ENCODE measurements at regions of chr7 and their contacts with region 1.

Region 1: GRCh38 chr7:27375958-27376357 is 133.4 kb downstream of the EVX1 start:
- DNase-seq: no peak
- H3K4me3 ChIP-seq: no peak overlapping the region
- H3K27ac ChIP-seq: no peak overlapping the region
- H3K4me1 ChIP-seq: peaks cover 0 to 8% (median 2%) of the 10 kb centered on the region in 4 experiments; a peak in 2 of 7 replicates
- H3K27me3 ChIP-seq: no peaks in the 10 kb centered on the region
- CTCF ChIP-seq: no peak
- EP300 ChIP-seq: no peak
- POLR2A ChIP-seq: no peak
- RAD21 ChIP-seq: no peak

Region 2: DNA sequence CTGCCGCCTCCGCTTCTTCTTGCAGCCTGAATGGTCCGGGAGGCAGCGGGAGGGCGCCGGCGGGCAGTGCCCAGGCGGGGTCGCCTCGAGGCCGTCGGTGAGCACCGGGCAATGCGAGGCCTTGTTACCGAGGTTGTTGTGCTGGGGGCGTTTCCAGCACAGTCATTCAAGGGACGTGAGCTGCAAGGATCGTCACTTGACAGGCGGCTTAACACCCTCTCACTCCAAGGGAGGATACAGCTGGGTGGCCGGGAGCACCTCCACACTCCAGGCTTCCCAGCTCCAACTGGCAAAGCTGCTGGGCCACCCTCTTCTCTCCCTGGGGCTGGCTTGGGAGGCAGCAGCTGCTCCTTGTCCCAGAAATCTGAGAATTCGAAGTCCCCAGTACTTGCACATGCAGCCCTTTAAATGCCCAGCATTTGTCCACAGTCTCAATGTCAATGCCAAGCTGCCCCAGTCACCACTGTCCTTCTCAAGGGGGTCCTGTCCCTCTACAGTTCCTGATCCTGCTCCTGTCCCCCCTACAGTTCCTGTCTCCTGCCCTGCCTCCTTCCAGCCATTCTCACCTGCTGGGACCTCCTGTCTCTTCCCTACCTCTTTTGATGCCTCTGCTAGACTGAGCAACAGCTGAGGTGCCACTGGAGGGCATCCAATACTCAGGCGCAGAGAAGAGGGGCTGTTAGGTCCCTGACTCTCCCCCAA is 186.5 kb before region 1 on chr7:
- CTCF ChIA-PET with region 1: no interaction called
- POLR2A ChIA-PET with region 1: no interaction called
- DNase-seq: peak in 1 of 2 experiments; percentile 64
- H3K4me3 ChIP-seq: peak overlapping the region in 1 of 4 experiments; percentile 38; a peak in 2 of 8 replicates
- H3K27ac ChIP-seq: no peak overlapping the region
- H3K4me1 ChIP-seq: peaks cover 0 to 27% (median 16%) of the 10 kb centered on the region in 4 experiments; a peak in 5 of 7 replicates
- H3K27me3 ChIP-seq: peaks cover 97 to 100% (median 98%) of the 10 kb centered on the region in 4 experiments
- CTCF ChIP-seq: no peak
- EP300 ChIP-seq: no peak
- POLR2A ChIP-seq: no peak
- RAD21 ChIP-seq: peak in 1 of 2 experiments; percentile 3; a peak in 1 of 4 replicates

Region 3: GRCh38 chr7:27389496-27389895 is 13.5 kb after region 1 on chr7:
- CTCF ChIA-PET with region 1: interaction called, 10 read pairs
- POLR2A ChIA-PET with region 1: no interaction called
- DNase-seq: no peak
- H3K4me3 ChIP-seq: no peak overlapping the region
- H3K27ac ChIP-seq: no peak overlapping the region
- H3K4me1 ChIP-seq: no peaks in the 10 kb centered on the region
- H3K27me3 ChIP-seq: no peaks in the 10 kb centered on the region
- CTCF ChIP-seq: no peak
- EP300 ChIP-seq: no peak
- POLR2A ChIP-seq: no peak
- RAD21 ChIP-seq: no peak

Region 4: DNA sequence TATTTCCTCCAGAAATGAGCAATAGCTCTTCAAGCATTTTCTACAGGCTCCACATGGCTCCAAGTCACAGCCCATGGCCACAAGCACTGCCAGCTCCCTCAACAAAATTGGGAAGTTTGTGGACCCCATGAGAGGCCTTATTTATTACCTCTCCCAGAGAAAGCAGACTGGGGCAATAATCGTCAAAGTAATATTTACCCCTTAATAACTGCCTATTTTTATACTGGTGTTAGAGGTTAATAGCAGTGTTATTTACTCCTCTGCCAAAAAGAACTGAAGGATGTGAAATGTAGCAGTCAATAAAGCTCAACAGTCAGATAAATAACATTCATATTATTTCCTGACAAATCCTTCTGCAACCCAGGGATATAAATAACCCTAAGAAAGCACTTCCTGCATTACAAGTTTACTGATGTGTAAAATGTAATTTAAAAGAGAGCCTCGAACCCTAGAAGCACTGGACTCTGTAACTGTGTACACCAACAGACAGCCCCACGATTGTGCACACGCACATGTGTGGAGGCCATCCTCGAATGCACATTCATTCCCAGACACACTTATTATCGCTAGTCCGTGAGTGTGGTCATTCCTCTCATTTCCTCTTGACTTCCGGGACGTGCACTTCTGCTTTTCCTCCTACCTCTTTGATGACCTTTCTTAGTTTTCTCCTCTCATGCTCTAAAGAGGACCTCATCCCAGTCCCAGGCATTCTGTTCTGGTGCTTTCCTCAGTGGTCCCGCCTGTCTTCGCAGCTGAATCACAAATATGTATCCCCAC is 24.0 kb after region 1 on chr7:
- CTCF ChIA-PET with region 1: no interaction called
- POLR2A ChIA-PET with region 1: no interaction called
- DNase-seq: no peak
- H3K4me3 ChIP-seq: no peak overlapping the region
- H3K27ac ChIP-seq: no peak overlapping the region
- H3K4me1 ChIP-seq: no peaks in the 10 kb centered on the region
- H3K27me3 ChIP-seq: no peaks in the 10 kb centered on the region; a peak in 1 of 7 replicates
- CTCF ChIP-seq: no peak
- EP300 ChIP-seq: no peak
- POLR2A ChIP-seq: no peak
- RAD21 ChIP-seq: no peak